Activated CD4-positive, alpha-beta memory T cell treated with anti-CD3 and anti-CD28 coated beads for 36 hours (primary cell): ENCODE measurements at regions of chr1 and their contacts with region 1.

Region 1: GRCh38 chr1:32933742-32934322 is 30.8 kb downstream of the RNF19B start:
- DNase-seq: no peak
- H3K4me3 Mint-ChIP-seq: no peak overlapping the region
- H3K27ac Mint-ChIP-seq: peak overlapping the region; percentile 42
- H3K4me1 Mint-ChIP-seq: peaks cover 25% of the 10 kb centered on the region
- H3K27me3 Mint-ChIP-seq: no peaks in the 10 kb centered on the region

Region 2: GRCh38 chr1:32716312-32717148 is 217.3 kb before region 1 on chr1:
- CTCF ChIA-PET with region 1: no interaction called
- POLR2A ChIA-PET with region 1: no interaction called
- intact Hi-C with region 1: no loop called
- DNase-seq: peak; percentile 85
- H3K4me3 Mint-ChIP-seq: no peak overlapping the region
- H3K27ac Mint-ChIP-seq: no peak overlapping the region
- H3K4me1 Mint-ChIP-seq: peaks cover 13% of the 10 kb centered on the region
- H3K27me3 Mint-ChIP-seq: no peaks in the 10 kb centered on the region

Region 3: GRCh38 chr1:32964461-32965250 is 30.8 kb after region 1 on chr1 and contains the start of gene RNF19B:
- CTCF ChIA-PET with region 1: interaction called, 4 read pairs
- POLR2A ChIA-PET with region 1: interaction called, 10 read pairs
- intact Hi-C with region 1: no loop called
- DNase-seq: peak; percentile 98
- H3K4me3 Mint-ChIP-seq: peak within 1 kb of the TSS; percentile 83
- H3K27ac Mint-ChIP-seq: peak within 1 kb of the TSS; percentile 80
- H3K4me1 Mint-ChIP-seq: peaks cover 61% of the 10 kb centered on the region
- H3K27me3 Mint-ChIP-seq: no peaks in the 10 kb centered on the region
- total RNA-seq, gene RNF19B: 72.4 to 72.8 TPM

Region 4: DNA sequence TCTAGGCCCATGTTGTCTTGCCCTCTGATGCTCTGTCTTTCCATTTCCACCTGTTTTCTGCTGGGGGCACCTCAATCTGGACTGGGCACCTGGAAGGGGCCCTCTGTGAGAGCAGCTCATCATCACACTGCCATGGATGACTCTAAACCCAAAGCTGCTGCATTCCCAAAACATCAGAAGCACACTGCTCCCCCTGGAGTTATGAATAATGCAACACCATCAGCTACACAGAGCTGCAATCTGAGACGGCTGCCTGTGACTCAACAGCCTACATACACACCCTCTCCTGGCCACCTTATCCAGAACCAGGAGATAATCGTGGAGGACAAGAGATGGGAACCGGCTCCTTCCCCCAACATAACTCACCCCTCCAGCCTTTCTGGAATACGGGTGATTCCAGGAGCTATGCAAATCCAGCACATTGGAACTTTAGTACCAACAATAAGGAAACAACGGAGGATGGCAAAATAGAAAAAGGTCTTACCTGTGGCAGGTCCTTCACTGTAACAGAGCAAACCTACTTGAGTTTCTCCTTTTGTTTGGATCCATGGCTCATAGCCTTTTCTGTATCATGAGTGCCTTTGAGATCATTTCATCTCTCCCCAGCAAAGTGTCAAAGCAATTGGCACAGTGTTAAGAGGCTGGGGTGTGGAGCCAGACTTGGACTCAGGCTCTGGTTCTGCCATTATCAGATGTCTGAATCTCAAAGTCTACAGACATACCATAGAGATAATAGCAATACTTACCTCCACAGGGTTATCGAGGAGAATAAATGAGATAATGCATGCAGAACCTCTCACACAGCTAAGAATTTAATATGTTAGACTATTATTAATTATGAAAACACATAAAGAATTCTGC is 73.6 kb after region 1 on chr1:
- CTCF ChIA-PET with region 1: interaction called, 18 read pairs
- POLR2A ChIA-PET with region 1: no interaction called
- intact Hi-C with region 1: loop called (anchors 1 kb)
- DNase-seq: peak; percentile 40
- H3K4me3 Mint-ChIP-seq: no peak overlapping the region
- H3K27ac Mint-ChIP-seq: no peak overlapping the region
- H3K4me1 Mint-ChIP-seq: peaks cover 41% of the 10 kb centered on the region
- H3K27me3 Mint-ChIP-seq: no peaks in the 10 kb centered on the region

Region 5: GRCh38 chr1:33055210-33056008 is 121.6 kb after region 1 on chr1:
- CTCF ChIA-PET with region 1: interaction called, 133 read pairs
- POLR2A ChIA-PET with region 1: interaction called, 3 read pairs
- intact Hi-C with region 1: loop called (anchors 1 kb)
- DNase-seq: peak; percentile 49
- H3K4me3 Mint-ChIP-seq: no peak overlapping the region
- H3K27ac Mint-ChIP-seq: no peak overlapping the region
- H3K4me1 Mint-ChIP-seq: peaks cover 3% of the 10 kb centered on the region
- H3K27me3 Mint-ChIP-seq: peaks cover 5% of the 10 kb centered on the region

Region 6: DNA sequence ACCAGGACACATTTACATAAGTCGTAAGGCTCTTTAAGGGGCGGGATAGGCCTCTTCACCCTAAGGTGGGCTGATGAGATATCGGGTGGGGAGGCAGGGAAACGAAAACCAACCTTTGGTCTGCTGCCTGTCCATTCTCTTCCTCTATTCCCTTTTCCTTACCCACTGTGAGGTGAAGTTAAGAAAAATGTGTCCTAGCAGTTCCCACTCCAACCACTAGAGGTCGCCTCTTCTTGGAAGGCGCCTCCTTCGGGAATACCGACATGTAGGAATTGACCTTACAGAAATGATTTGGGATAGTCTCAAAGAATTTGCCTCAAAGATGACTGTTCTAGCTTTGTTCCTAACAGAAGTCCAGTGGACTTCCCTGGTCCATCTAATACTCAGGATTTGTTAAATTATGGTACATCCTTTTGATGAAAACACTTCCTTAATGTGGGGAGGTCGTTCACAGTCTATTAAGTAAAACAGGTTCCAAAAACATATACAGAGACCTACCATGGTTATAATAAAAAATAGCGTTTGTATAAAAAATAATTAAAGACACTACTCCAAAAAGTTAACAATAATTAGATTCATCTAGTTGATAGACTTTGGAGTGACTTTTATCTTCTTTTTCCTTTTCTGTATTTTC is 161.3 kb after region 1 on chr1:
- CTCF ChIA-PET with region 1: interaction called, 11 read pairs
- POLR2A ChIA-PET with region 1: no interaction called
- intact Hi-C with region 1: no loop called
- DNase-seq: peak; percentile 28
- H3K4me3 Mint-ChIP-seq: no peak overlapping the region
- H3K27ac Mint-ChIP-seq: no peak overlapping the region
- H3K4me1 Mint-ChIP-seq: peaks cover 28% of the 10 kb centered on the region
- H3K27me3 Mint-ChIP-seq: no peaks in the 10 kb centered on the region